CD4-positive, alpha-beta T cell (primary cell): ENCODE measurements at regions of chr20 and their contacts with region 1.

Region 1: GRCh38 chr20:18793625-18794427 is 19.8 kb upstream of the SCP2D1 start:
- DNase-seq: peak; percentile 75 to 98 (median 82)
- ATAC-seq: peak; percentile 96
- H3K4me3 ChIP-seq: peak overlapping the region; percentile 75
- H3K4me3 Mint-ChIP-seq: peak overlapping the region; percentile 92
- H3K27ac ChIP-seq: peak overlapping the region; percentile 85 to 93
- H3K27ac Mint-ChIP-seq: peak overlapping the region; percentile 100
- H3K4me1 ChIP-seq: peaks cover 11% of the 10 kb centered on the region
- H3K4me1 Mint-ChIP-seq: peaks cover 28% of the 10 kb centered on the region
- H3K27me3 ChIP-seq: peaks cover 0 to 13% of the 10 kb centered on the region in 2 experiments
- H3K27me3 Mint-ChIP-seq: peaks cover 40% of the 10 kb centered on the region
- CTCF ChIP-seq: no peak

Region 2: DNA sequence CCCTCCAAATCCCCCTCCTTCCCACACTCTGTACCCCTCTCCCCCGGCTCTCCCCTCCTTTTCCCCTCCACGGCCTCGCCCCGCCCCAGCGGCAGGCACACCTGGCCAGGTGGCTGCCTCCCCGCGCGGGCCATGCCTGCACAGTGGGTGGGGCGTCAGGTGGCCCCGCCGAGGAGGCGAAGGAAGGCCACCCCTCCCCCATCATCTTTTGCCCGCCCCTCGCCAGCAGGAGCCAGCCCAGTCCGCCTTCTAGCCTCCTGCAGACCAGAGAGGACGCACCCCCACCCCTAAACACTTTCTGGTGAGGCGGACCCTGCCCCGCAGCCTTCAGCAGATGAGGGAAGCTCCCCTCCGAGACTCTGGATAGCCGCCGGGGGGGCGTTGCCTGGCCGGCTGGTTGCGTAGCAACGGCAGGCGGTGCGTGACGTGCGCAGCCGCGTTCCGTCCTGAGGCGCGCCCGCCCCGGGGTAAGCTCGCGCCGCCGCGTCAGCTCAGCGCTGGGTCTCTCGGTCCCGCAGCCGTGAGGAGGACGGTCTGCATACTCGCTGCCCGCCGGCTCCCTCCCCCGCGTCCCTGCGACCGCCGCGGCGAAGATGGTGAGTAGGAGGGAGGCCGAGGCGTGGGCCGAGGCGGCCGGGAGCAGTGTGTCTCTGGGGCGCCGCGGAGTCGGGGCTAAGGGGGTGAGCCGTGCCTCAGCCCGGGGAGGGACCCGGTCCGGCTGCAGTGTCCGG is 1224.0 kb before region 1 on chr20 and contains the start of gene DSTN:
- CTCF ChIA-PET with region 1: no interaction called
- POLR2A ChIA-PET with region 1: no interaction called
- intact Hi-C with region 1: loop called in 1 of 2 experiments (anchors 10 kb)
- DNase-seq: peak; percentile 75 to 95 (median 82)
- ATAC-seq: peak; percentile 87
- H3K4me3 ChIP-seq: peak within 1 kb of the TSS; percentile 85
- H3K4me3 Mint-ChIP-seq: peak within 1 kb of the TSS; percentile 96
- H3K27ac ChIP-seq: peak within 1 kb of the TSS; percentile 53 to 55
- H3K27ac Mint-ChIP-seq: peak within 1 kb of the TSS; percentile 72
- H3K4me1 ChIP-seq: peaks cover 17% of the 10 kb centered on the region
- H3K4me1 Mint-ChIP-seq: peaks cover 34% of the 10 kb centered on the region
- H3K27me3 ChIP-seq: no peaks in the 10 kb centered on the region
- H3K27me3 Mint-ChIP-seq: no peaks in the 10 kb centered on the region
- CTCF ChIP-seq: no peak
- total RNA-seq, gene DSTN: 36.0 to 38.9 TPM

Region 3: DNA sequence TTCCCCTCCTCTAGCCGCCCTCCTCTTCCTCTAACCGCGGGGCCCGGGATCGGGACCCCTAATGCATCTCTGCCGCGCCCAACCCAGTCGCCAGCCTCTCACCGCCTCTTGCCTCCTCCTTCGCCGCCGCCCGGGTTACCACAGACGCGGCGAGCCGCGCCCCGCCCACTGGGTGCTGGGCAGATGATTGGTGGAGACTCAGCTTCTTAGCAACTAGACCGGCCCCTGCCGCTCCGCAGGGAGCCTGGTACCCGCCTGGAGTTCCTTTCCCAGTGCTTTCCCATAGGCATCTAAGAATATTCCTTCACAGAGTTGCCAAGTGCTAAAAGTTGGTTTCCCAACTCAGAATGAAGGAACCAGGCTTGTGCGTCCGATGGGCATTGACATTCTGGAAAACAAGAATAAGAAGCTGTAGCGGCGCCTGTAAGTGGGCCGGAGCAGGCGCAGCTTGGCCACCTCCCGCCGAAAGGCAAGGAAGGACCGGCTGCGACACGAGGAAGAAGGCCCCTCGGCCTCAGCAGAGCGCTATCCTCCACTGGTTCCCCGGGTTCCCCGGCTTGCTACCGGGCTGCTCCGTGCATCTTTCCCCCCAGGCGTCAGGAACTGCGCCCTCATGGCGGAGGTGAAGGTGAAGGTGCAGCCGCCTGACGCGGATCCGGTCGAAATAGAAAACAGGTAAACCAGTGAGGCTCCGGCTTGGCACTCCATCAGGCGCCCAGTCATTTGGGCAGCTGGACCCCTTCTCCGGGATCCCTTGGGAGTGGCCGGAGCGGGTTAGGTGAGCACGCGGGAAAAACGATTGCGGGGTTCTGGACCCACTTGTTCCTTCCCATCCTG is 326.7 kb before region 1 on chr20 and contains the starts of genes DZANK1 and POLR3F:
- CTCF ChIA-PET with region 1: no interaction called
- POLR2A ChIA-PET with region 1: interaction called, 11 read pairs
- intact Hi-C with region 1: loop called (anchors 1 to 5 kb)
- DNase-seq: peak; percentile 84 to 96 (median 90)
- ATAC-seq: peak; percentile 89
- H3K4me3 ChIP-seq: peak within 1 kb of the TSS; percentile 95
- H3K4me3 Mint-ChIP-seq: peak within 1 kb of the TSS; percentile 96
- H3K27ac ChIP-seq: peak within 1 kb of the TSS; percentile 77 to 91
- H3K27ac Mint-ChIP-seq: peak within 1 kb of the TSS; percentile 96
- H3K4me1 ChIP-seq: peaks cover 17% of the 10 kb centered on the region
- H3K4me1 Mint-ChIP-seq: peaks cover 39% of the 10 kb centered on the region
- H3K27me3 ChIP-seq: no peaks in the 10 kb centered on the region
- H3K27me3 Mint-ChIP-seq: no peaks in the 10 kb centered on the region
- CTCF ChIP-seq: no peak
- total RNA-seq, gene DZANK1: 1.8 to 1.9 TPM
- total RNA-seq, gene POLR3F: 7.9 to 8.8 TPM

Region 4: GRCh38 chr20:18566892-18567742 is 226.7 kb before region 1 on chr20 and contains the start of gene SMIM26:
- CTCF ChIA-PET with region 1: no interaction called
- POLR2A ChIA-PET with region 1: interaction called, 7 read pairs
- intact Hi-C with region 1: loop called (anchors 2 kb)
- DNase-seq: peak; percentile 90 to 97 (median 94)
- ATAC-seq: peak; percentile 99
- H3K4me3 ChIP-seq: peak within 1 kb of the TSS; percentile 91
- H3K4me3 Mint-ChIP-seq: peak within 1 kb of the TSS; percentile 99
- H3K27ac ChIP-seq: peak within 1 kb of the TSS; percentile 82 to 94
- H3K27ac Mint-ChIP-seq: peak within 1 kb of the TSS; percentile 100
- H3K4me1 ChIP-seq: peaks cover 20% of the 10 kb centered on the region
- H3K4me1 Mint-ChIP-seq: peaks cover 28% of the 10 kb centered on the region
- H3K27me3 ChIP-seq: no peaks in the 10 kb centered on the region
- H3K27me3 Mint-ChIP-seq: no peaks in the 10 kb centered on the region
- CTCF ChIP-seq: no peak
- total RNA-seq, gene SMIM26: 78.7 to 79.8 TPM

Region 5: GRCh38 chr20:20712474-20713243 is 1918.8 kb after region 1 on chr20 and contains the start of gene RALGAPA2:
- CTCF ChIA-PET with region 1: no interaction called
- POLR2A ChIA-PET with region 1: no interaction called
- intact Hi-C with region 1: loop called in 1 of 2 experiments (anchors 10 kb)
- DNase-seq: peak; percentile 89 to 97 (median 94)
- ATAC-seq: peak; percentile 93
- H3K4me3 ChIP-seq: peak within 1 kb of the TSS; percentile 82
- H3K4me3 Mint-ChIP-seq: peak within 1 kb of the TSS; percentile 98
- H3K27ac ChIP-seq: peak within 1 kb of the TSS; percentile 79 to 95
- H3K27ac Mint-ChIP-seq: peak within 1 kb of the TSS; percentile 92
- H3K4me1 ChIP-seq: peaks cover 15% of the 10 kb centered on the region
- H3K4me1 Mint-ChIP-seq: peaks cover 40% of the 10 kb centered on the region
- H3K27me3 ChIP-seq: no peaks in the 10 kb centered on the region
- H3K27me3 Mint-ChIP-seq: peaks cover 5% of the 10 kb centered on the region
- CTCF ChIP-seq: no peak
- total RNA-seq, gene RALGAPA2: 21.2 to 21.9 TPM